Activated CD4-positive, alpha-beta T cell treated with anti-CD3 and anti-CD28 coated beads, Interleukin-2, amount 10 ng/mL, durations not matched to agents 24 days and 14 days (primary cell): ENCODE measurements at regions of chr22 and their contacts with region 1.

Region 1: GRCh38 chr22:22156716-22157347 is 87.8 kb upstream of the VPREB1 start:
- DNase-seq: peak; percentile 88
- H3K4me3 Mint-ChIP-seq: no peak overlapping the region
- H3K27ac Mint-ChIP-seq: peak overlapping the region; percentile 38
- H3K4me1 Mint-ChIP-seq: peaks cover 3% of the 10 kb centered on the region
- H3K27me3 Mint-ChIP-seq: peaks cover 19% of the 10 kb centered on the region

Region 2: GRCh38 chr22:22060200-22061084 is 96.4 kb before region 1 on chr22:
- intact Hi-C with region 1: loop called (anchors 10 kb)
- DNase-seq: peak; percentile 89
- H3K4me3 Mint-ChIP-seq: no peak overlapping the region
- H3K27ac Mint-ChIP-seq: no peak overlapping the region
- H3K4me1 Mint-ChIP-seq: no peaks in the 10 kb centered on the region
- H3K27me3 Mint-ChIP-seq: peaks cover 28% of the 10 kb centered on the region

Region 3: GRCh38 chr22:22195265-22196017 is 38.6 kb after region 1 on chr22:
- intact Hi-C with region 1: loop called (anchors 1 kb)
- DNase-seq: peak; percentile 93
- H3K4me3 Mint-ChIP-seq: no peak overlapping the region
- H3K27ac Mint-ChIP-seq: no peak overlapping the region
- H3K4me1 Mint-ChIP-seq: no peaks in the 10 kb centered on the region
- H3K27me3 Mint-ChIP-seq: peaks cover 26% of the 10 kb centered on the region